CD4-positive, alpha-beta memory T cell (primary cell): ENCODE measurements at regions of chr11 and their contacts with region 1.

Region 1: DNA sequence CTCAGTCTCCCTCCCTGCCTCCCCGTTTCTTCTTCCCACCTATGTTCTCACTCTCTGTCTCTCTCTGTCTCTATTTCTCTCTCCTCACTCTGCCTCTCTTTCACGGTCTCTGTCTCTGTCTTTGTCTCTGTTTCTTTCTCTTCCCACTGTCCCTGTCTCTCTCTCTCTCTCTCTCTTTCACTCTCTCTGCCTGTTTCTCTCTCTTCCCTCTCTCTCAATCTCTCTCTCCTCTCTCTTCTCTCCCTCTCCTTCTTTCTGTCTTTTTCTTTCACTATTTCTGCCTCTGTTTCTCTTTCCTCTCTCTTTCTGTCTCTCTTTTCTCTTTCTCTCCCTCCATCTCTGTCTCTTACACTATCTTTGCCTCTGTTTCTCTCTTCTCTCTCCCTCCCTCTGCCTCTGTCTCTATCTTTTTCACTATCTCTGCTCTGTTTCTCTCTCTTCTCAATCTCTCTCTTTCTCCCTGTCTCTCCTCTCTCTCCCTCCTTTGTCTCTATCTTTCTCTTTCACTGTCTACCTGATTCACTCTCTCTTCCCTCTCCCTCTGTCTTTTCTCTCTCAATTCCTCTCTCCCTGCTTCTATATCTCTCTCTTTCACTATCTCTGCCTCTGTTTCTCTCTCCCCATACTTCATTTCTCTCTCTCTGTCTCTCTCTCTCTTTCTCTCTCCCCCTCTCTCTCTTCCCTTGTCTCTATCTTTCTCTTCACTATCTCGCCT is 5.4 kb downstream of the APLNR start:
- DNase-seq: no peak
- H3K4me3 ChIP-seq: no peak overlapping the region
- H3K4me3 Mint-ChIP-seq: no peak overlapping the region
- H3K27ac ChIP-seq: no peak overlapping the region
- H3K27ac Mint-ChIP-seq: peak overlapping the region in 1 of 7 donors; percentile 63
- H3K4me1 ChIP-seq: no peaks in the 10 kb centered on the region
- H3K4me1 Mint-ChIP-seq: peaks cover 4 to 10% (median 5%) of the 10 kb centered on the region in 4 donors
- H3K27me3 ChIP-seq: peaks cover 17% of the 10 kb centered on the region
- H3K27me3 Mint-ChIP-seq: peaks cover 34 to 54% of the 10 kb centered on the region in 2 donors

Region 2: DNA sequence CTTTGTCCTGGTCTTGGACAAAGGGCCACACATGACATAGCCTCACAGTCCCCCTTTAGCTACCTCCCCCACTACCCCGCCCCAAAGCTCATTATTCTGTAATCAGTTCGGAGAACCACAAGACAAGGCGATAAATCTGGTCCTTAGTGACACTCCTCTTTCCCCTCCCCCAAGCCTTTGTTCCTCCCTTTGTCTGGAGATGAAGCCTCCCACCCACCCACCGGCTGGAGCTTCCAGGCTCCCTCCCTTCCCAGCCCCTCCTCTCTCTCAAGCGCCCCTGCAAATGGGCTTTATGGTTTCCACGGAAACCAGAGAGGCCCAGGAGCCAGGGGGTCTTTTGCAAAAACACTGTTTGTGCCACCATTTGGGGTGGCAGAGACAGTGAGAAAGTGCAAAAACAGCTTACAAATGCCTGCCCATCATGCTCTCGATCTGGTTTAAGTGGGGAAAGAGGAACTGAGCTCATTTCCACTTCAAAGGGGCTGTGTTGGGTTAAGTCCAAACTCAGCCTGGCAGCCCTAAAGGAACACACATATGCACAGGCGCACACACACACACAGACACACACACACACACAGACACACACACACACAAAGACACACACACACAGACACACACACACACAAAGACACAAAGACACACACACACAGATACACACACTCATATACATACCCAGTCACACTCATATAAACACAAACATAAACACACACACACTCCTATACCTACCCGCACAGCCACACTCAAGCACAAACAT is 18.2 kb before region 1 on chr11:
- CTCF ChIA-PET with region 1: no interaction called
- POLR2A ChIA-PET with region 1: no interaction called
- intact Hi-C with region 1: no loop called
- DNase-seq: no peak
- H3K4me3 ChIP-seq: no peak overlapping the region
- H3K4me3 Mint-ChIP-seq: no peak overlapping the region
- H3K27ac ChIP-seq: no peak overlapping the region
- H3K27ac Mint-ChIP-seq: no peak overlapping the region
- H3K4me1 ChIP-seq: no peaks in the 10 kb centered on the region
- H3K4me1 Mint-ChIP-seq: no peaks in the 10 kb centered on the region
- H3K27me3 ChIP-seq: no peaks in the 10 kb centered on the region
- H3K27me3 Mint-ChIP-seq: peaks cover 3 to 13% of the 10 kb centered on the region in 2 donors

Region 3: DNA sequence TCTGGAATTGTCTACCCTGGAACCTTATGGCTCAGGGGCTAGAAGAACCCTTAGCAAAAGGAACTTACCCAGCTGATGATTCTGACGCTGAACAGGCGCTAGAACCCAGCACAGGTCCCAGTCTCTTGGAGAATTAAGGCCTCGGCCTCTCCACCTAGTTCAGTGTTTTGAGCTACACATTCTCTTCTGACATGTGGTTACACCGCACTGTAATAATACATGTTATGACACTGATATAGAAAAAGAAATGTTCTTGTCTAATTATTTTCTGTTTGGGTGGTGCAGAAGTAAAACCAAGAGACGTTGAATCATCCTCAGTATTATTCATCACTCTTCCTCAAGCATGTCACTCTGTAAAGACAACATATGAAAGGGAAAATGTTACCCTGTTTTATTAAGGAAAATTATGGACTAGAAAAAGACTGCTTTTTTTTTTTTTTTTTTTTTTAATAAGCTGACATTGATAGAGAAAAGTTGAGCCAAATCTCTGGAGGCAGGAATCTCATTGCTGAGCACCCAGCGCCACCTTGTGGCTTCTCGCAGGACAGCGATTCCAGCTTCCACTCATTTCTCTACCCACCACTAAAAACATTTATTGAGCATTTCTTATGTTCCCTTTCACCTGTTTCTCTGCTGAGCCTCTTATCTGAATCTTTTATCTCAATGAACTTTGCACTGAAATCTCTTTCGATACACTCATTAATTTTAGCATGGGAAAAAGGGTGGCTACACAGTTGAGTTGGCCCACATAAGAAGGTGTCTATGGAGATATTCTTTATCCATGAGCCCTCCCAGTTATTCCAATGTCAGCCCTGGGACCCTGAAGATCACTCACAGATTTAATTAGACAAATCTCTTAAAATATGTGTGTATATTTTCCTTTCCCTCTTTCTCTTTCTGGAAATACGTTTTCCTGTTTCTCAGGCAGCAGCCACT is 18.0 kb after region 1 on chr11:
- CTCF ChIA-PET with region 1: interaction called, 11 read pairs
- POLR2A ChIA-PET with region 1: no interaction called
- intact Hi-C with region 1: no loop called
- DNase-seq: peak in 4 of 5 donors; percentile 5 to 17 (median 14)
- H3K4me3 ChIP-seq: no peak overlapping the region
- H3K4me3 Mint-ChIP-seq: peak overlapping the region in 1 of 8 donors; percentile 39
- H3K27ac ChIP-seq: no peak overlapping the region
- H3K27ac Mint-ChIP-seq: no peak overlapping the region
- H3K4me1 ChIP-seq: no peaks in the 10 kb centered on the region
- H3K4me1 Mint-ChIP-seq: peaks cover 2 to 7% (median 2%) of the 10 kb centered on the region in 4 donors
- H3K27me3 ChIP-seq: peaks cover 3% of the 10 kb centered on the region
- H3K27me3 Mint-ChIP-seq: peaks cover 17 to 30% of the 10 kb centered on the region in 2 donors